ENCODE measurements at regions of chr10 and their contacts with region 1.

Region 1: DNA sequence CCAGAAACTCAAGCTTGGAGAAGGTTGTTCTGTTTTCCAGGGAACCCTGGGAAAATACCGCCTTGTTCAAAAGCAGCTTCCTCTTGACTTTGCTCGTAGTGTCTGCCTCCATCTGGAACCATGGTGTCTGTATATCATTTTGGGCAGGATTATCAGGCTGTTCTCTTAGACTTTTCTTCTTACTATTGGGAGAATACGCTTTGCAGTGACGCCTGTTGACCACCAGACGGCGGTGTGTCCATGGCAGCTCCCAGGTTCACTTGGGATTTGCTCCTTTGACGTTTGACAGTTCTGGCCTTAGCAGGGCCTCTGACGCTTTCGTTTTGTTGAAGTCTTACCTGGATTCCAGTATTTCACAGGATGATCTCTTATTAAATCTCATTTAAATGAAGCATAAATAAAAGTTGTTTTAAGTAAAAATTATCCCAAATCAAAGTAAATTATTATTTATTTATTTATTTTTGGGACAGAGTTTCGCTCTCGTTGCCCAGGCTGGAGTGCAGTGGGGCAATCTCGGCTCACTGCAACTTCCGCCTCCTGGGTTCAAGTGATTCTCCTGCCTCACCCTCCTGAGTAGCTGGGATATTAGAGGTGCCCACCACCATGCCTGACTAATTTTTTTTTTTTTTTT is 41.8 kb upstream of the GJD4 start:
- DNase-seq: no peak
- H3K4me3 ChIP-seq: no peak overlapping the region
- H3K27me3 ChIP-seq: no peaks in the 10 kb centered on the region
- CTCF ChIP-seq: peak; percentile 97

Region 2: DNA sequence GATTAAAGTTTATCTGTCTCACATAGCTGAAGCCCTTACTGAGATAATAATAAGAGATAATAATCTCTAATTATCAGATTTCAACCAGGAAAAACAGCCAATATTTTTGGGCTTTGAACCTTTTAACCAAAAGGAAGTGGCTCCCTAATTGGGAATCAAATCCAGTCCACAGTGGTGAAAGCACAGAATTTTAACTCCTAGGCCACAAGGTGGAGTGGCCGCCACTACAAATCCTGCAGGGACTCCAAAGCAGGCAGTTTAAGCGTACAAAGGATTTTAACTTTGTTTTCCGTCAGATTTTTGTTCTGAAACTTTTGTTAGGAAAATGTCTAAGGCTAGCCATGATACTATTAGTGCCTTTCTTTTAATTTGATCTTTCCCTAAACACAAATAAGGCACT is 326.6 kb before region 1 on chr10:
- CTCF ChIA-PET with region 1: interaction called, 13 read pairs
- POLR2A ChIA-PET with region 1: no interaction called
- DNase-seq: no peak
- H3K4me3 ChIP-seq: no peak overlapping the region
- H3K27me3 ChIP-seq: no peaks in the 10 kb centered on the region
- CTCF ChIP-seq: peak; percentile 35; the same call in 1 of the 2 replicates

Region 3: GRCh38 chr10:35546824-35547273 is 16.5 kb before region 1 on chr10:
- CTCF ChIA-PET with region 1: interaction called, 35 read pairs
- POLR2A ChIA-PET with region 1: no interaction called
- DNase-seq: peak; percentile 63
- H3K4me3 ChIP-seq: no peak overlapping the region
- H3K27me3 ChIP-seq: no peaks in the 10 kb centered on the region
- CTCF ChIP-seq: peak; percentile 33

Region 4: GRCh38 chr10:35643151-35644044 is 80.0 kb after region 1 on chr10:
- CTCF ChIA-PET with region 1: no interaction called
- POLR2A ChIA-PET with region 1: no interaction called
- DNase-seq: no peak
- H3K4me3 ChIP-seq: peak overlapping the region; percentile 67
- H3K27me3 ChIP-seq: peaks cover 10% of the 10 kb centered on the region
- CTCF ChIP-seq: no peak